ENCODE measurements at regions of chr11 and their contacts with region 1.

Region 1: DNA sequence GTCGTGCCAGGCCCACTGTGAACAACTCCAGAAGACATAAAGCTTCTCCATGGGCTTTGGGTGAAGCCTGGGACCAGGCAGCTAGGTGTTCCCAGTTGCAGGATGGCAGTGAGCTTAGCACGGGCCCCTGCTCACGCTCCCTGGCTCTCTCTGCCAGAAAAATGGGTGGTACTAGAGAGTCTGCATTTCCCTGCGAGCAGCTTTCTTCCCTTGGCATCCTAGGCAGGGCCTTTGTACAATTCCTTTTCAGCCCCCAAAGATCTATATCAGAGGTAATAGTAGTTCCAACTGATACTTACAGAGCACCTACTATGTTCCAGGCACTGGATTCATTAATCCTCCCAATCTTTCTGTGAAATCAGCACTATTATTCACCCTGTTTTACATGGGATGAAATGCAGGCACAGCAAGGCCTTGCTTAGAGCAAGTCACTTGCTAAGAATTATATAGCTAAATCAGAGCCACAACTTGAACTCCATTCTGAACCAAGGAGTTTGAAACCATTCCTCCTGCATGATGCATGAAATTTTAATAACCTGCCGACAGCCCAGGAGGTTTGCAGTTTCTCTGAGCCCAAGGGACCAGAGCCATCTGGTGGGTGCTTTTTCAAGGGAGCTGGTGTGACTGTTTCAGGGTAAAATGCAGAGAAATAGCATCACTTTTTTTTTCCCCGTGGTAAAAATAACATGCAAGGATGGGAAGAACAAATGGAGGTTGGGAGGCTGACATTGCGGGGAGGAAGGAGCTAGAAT is 22.7 kb downstream of the NAV2 start:
- H3K4me3 ChIP-seq: no peak overlapping the region
- H3K27ac ChIP-seq: no peak overlapping the region
- H3K4me1 ChIP-seq: no peaks in the 10 kb centered on the region
- CTCF ChIP-seq: no peak

Region 2: GRCh38 chr11:19561011-19561410 is 174.3 kb before region 1 on chr11:
- CTCF ChIA-PET with region 1: interaction called, 17 read pairs
- POLR2A ChIA-PET with region 1: no interaction called
- H3K4me3 ChIP-seq: no peak overlapping the region
- H3K27ac ChIP-seq: no peak overlapping the region
- H3K4me1 ChIP-seq: no peaks in the 10 kb centered on the region
- CTCF ChIP-seq: no peak

Region 3: GRCh38 chr11:19813158-19813879 is 78.0 kb after region 1 on chr11:
- CTCF ChIA-PET with region 1: no interaction called
- POLR2A ChIA-PET with region 1: no interaction called
- H3K4me3 ChIP-seq: no peak overlapping the region
- H3K27ac ChIP-seq: no peak overlapping the region
- H3K4me1 ChIP-seq: no peaks in the 10 kb centered on the region; the same call in 1 of the 2 replicates
- CTCF ChIP-seq: no peak

Measured in HEK293 (cell line).